ENCODE measurements at regions of chr9 and their contacts with region 1.

Region 1: GRCh38 chr9:133184962-133185361 is 21.2 kb upstream of the GBGT1 start:
- DNase-seq: no peak
- ATAC-seq: peak; percentile 70

Region 2: DNA sequence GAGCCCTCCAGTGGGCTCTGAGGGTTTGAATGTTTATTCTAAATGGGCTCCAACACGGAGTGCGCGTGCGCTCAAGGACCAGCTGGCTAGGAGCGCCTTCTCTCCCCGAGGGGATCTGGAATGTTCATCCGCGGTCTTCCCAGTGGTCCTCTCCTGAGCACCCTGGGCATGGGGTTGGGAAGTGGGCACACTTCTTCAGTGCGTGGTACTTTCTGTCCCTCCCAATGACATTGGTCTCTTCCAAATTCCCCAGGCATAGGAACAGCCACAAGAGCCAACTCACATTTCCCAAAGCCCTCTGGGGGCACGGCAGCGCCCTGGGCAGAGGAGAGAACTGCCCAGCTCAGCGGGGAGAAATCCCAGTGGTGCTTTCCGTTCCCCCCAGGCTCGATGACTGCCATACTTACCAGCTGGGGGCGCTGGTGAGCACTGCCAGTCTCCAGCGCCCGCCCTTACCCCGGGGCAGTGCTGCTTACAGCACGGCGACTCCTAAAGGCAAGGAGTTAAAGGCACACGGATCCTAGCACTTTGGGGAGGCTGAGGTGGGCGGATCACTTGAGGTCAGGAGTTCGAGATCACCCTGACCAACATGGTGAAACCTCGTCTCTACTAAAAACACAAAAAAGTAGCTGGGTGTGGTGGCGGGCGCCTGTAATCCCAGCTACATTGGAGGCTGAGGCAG is 54.0 kb after region 1 on chr9:
- intact Hi-C with region 1: loop called (anchors 5 kb)
- DNase-seq: peak; percentile 79
- ATAC-seq: peak; percentile 60

Region 3: GRCh38 chr9:133275105-133276000 is 90.4 kb after region 1 on chr9 and contains the start of gene ABO:
- intact Hi-C with region 1: loop called (anchors 1 kb)
- DNase-seq: no peak
- ATAC-seq: peak; percentile 67
- total RNA-seq, gene ABO: 1.5 TPM

Region 4: DNA sequence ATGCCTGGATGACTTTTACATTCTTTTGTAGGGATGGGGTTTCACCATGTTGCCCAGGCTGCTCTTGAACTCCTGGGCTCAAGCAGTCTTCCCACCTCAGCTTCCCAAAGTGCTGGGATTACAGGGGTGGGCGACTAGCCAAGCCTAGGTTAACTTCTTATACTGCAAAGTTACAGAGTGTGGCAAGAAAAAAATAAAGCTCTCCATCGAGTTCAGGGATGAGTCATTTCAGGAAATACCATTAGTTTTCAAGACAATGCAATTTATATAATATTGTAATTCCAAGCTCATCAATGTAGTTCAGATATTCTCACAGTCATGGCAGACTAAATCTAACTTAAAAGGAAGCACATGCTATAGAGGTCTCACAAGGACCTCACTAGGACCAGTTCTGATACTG is 101.6 kb after region 1 on chr9:
- intact Hi-C with region 1: no loop called
- DNase-seq: no peak
- ATAC-seq: no peak

Region 5: DNA sequence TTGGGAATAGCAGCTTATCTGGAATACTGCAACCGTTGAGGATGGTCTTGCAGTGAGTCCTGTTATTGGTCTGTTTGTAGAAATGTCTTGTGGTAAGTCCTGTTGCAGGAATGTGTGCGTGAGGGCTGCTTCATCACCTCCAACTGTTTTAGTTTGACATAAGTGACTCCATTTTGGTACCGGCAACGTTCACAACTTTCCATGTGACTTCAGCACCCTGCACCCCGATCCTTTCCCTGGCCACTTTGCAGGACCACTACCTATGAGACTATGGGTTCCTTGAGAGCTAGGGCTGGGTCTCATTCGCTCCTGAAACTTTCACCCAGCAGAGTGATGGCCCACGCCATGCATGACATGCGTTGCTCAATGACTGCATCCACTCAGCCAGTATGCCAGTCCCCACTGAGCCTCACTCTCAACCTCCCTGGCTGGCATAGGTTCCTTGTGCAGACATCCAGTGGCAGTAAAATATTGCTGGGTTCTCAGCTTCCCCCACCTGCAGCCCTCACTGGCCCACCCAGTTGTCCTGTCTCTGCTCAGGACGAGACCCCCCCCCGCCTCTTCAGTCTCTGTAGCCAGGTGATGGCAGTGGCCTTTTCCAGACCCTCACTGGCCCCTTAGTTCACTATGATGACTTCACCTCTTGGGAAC is 143.0 kb after region 1 on chr9:
- intact Hi-C with region 1: loop called (anchors 5 kb)
- DNase-seq: no peak
- ATAC-seq: no peak

Region 6: DNA sequence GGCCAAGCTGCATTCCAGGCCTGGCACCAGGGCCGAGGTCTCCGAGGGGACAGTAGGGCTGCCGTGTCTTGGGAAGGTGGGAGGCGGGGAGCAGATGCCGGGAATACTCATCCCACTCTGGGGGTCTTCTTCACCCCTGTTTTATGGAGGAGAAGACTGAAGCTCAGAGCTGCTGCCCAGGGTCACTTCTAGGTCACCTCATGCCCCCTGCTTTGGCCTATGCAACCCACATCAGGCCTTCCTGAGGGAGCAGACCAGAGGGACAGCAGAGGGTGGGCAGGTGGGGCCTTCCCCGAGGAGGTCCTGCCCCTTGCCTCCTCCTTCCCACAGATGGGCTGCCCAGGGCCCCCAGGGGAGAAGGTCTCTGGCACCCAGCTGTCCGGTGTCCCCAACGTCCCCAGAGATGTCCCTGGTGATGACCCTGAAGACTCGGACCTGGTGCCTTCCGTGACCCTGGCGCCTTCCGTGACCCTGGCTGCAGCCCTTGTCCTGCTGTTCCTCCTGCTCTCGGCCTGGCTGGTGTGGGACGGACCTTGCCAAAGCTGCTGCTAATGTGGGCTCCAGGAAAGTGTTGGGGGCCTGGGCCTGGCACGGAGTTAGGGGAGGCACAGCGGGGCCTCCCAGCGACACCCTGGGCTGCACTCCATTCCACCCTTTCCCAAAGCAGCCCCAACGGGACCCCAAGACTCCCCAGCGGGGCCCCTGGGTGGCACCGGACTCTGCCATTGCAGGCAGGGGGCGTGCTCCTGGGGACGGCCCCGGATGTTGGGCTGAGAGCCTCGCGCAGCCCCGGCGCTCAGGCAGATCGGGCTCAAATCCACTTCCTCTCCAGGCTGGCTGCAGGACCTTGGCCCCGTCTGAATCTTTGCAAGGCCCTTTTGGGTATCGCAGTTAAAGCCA is 300.6 kb after region 1 on chr9:
- intact Hi-C with region 1: loop called (anchors 1 kb)
- DNase-seq: peak; percentile 53
- ATAC-seq: no peak